ENCODE measurements at regions of chr6 and their contacts with region 1.

Region 1: GRCh38 chr6:149028767-149029405 is 282.1 kb downstream of the UST start:
- DNase-seq: peak; percentile 93
- H3K4me3 Mint-ChIP-seq: peak overlapping the region; percentile 52
- H3K27ac Mint-ChIP-seq: peak overlapping the region; percentile 74
- H3K4me1 Mint-ChIP-seq: peaks cover 49% of the 10 kb centered on the region
- H3K27me3 Mint-ChIP-seq: no peaks in the 10 kb centered on the region

Region 2: GRCh38 chr6:148559848-148560433 is 468.9 kb before region 1 on chr6:
- intact Hi-C with region 1: loop called (anchors 10 kb)
- DNase-seq: peak; percentile 90
- H3K4me3 Mint-ChIP-seq: no peak overlapping the region
- H3K27ac Mint-ChIP-seq: no peak overlapping the region
- H3K4me1 Mint-ChIP-seq: peaks cover 7% of the 10 kb centered on the region
- H3K27me3 Mint-ChIP-seq: peaks cover 25% of the 10 kb centered on the region

Region 3: GRCh38 chr6:149082286-149082707 is 53.4 kb after region 1 on chr6:
- intact Hi-C with region 1: loop called (anchors 1 kb)
- DNase-seq: peak; percentile 96
- H3K4me3 Mint-ChIP-seq: peak overlapping the region; percentile 69
- H3K27ac Mint-ChIP-seq: peak overlapping the region; percentile 92
- H3K4me1 Mint-ChIP-seq: peaks cover 76% of the 10 kb centered on the region
- H3K27me3 Mint-ChIP-seq: no peaks in the 10 kb centered on the region

Region 4: DNA sequence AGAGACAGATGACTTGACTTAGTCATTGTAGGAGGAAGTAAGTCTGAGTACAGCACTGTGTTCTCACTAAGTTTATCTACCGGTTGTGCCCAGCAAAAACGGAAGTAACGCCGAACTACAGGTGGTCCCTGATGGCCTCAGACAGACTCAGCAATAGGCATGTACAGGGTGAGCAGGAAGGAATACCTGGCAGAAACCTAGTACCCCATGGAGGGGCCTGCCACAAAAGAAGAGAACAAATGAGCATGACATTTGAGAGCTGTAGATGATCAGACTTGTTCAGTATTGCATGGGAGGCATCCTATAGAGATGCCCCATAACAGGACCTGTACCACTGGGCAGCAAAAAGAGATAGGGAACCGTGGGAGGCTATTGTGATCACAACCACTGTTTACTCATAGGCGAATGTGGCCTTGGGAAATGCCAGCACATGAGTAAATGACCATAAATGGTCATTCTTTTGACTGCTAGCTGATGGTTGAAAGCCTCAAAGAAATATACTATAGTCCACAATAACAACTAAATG is 182.2 kb after region 1 on chr6:
- intact Hi-C with region 1: loop called (anchors 1 kb)
- DNase-seq: peak; percentile 74
- H3K4me3 Mint-ChIP-seq: no peak overlapping the region
- H3K27ac Mint-ChIP-seq: no peak overlapping the region
- H3K4me1 Mint-ChIP-seq: peaks cover 29% of the 10 kb centered on the region
- H3K27me3 Mint-ChIP-seq: no peaks in the 10 kb centered on the region

Region 5: GRCh38 chr6:149335924-149336608 is 307.2 kb after region 1 on chr6:
- intact Hi-C with region 1: loop called (anchors 1 kb)
- DNase-seq: peak; percentile 72
- H3K4me3 Mint-ChIP-seq: peak overlapping the region; percentile 74
- H3K27ac Mint-ChIP-seq: peak overlapping the region; percentile 87
- H3K4me1 Mint-ChIP-seq: peaks cover 69% of the 10 kb centered on the region
- H3K27me3 Mint-ChIP-seq: no peaks in the 10 kb centered on the region

Region 6: GRCh38 chr6:149499066-149499465 is 470.2 kb after region 1 on chr6:
- intact Hi-C with region 1: loop called (anchors 1 kb)
- DNase-seq: peak; percentile 38
- H3K4me3 Mint-ChIP-seq: no peak overlapping the region
- H3K27ac Mint-ChIP-seq: peak overlapping the region; percentile 48
- H3K4me1 Mint-ChIP-seq: peaks cover 63% of the 10 kb centered on the region
- H3K27me3 Mint-ChIP-seq: no peaks in the 10 kb centered on the region